Pancreas (tissue), 10 donors: ENCODE measurements at regions of chr11 and their contacts with region 1.

Region 1: GRCh38 chr11:62905927-62906531 is 15.1 kb downstream of the CHRM1 start:
- DNase-seq: peak; percentile 66 to 94 (median 87)
- ATAC-seq: peak in 3 of 4 donors; percentile 62 to 71 (median 64)
- H3K4me3 ChIP-seq: no peak overlapping the region
- H3K27ac ChIP-seq: no peak overlapping the region
- H3K4me1 ChIP-seq: peaks cover 17 to 18% (median 18%) of the 10 kb centered on the region in 3 donors
- H3K27me3 ChIP-seq: no peaks in the 10 kb centered on the region
- CTCF ChIP-seq: peak; percentile 95 to 98 (median 97)

Region 2: GRCh38 chr11:62601394-62602140 is 304.5 kb before region 1 on chr11 and contains the start of gene MTA2:
- intact Hi-C with region 1: no loop called
- DNase-seq: peak; percentile 97 to 100 (median 98)
- ATAC-seq: peak; percentile 90 to 94 (median 90)
- H3K4me3 ChIP-seq: peak within 1 kb of the TSS; percentile 84 to 96 (median 90)
- H3K27ac ChIP-seq: peak within 1 kb of the TSS; percentile 74 to 94 (median 88)
- H3K4me1 ChIP-seq: peaks cover 0 to 14% (median 11%) of the 10 kb centered on the region in 3 donors
- H3K27me3 ChIP-seq: no peaks in the 10 kb centered on the region
- CTCF ChIP-seq: no peak
- total RNA-seq, gene MTA2: 14.7 to 35.6 (median 23.0) TPM

Region 3: DNA sequence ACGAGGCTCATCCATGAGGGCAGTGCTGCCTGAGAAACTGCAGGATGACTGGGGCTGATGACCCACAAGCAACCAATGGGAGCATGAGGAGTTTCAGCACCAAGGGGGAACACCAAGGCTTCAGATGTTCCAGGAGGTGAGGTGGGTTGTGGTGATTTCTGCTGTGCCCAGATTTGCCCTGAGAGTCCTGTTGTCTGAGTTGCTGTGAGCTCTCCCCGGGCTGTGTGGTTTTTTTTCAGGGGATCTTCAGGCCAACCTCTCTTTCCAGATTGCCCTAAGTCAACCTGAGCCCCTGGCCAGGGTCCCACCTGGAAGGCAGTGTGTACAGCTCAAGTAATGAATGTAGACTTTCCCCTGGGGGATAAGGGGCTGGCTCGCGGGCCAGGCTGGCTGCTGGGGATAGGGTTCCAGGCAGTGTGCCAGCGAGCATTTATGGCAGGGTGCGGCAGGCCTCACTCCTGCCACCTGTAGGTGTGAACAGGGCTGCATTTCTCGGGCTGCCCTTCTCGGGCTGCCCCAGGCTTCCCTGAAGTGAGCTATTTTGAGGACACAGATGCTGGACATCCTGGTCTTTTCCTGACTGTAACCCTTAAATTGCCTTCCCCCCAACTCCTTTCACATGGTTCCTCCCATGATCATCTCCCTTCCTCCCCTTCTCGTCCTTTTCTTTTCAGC is 69.0 kb after region 1 on chr11:
- intact Hi-C with region 1: loop called in 1 of 3 experiments (anchors 10 kb)
- DNase-seq: peak; percentile 44 to 89 (median 79)
- ATAC-seq: peak; percentile 92 to 99 (median 96)
- H3K4me3 ChIP-seq: no peak overlapping the region
- H3K27ac ChIP-seq: no peak overlapping the region
- H3K4me1 ChIP-seq: peaks cover 0 to 3% (median 0%) of the 10 kb centered on the region in 3 donors
- H3K27me3 ChIP-seq: no peaks in the 10 kb centered on the region
- CTCF ChIP-seq: peak; percentile 49 to 66 (median 62)

Region 4: DNA sequence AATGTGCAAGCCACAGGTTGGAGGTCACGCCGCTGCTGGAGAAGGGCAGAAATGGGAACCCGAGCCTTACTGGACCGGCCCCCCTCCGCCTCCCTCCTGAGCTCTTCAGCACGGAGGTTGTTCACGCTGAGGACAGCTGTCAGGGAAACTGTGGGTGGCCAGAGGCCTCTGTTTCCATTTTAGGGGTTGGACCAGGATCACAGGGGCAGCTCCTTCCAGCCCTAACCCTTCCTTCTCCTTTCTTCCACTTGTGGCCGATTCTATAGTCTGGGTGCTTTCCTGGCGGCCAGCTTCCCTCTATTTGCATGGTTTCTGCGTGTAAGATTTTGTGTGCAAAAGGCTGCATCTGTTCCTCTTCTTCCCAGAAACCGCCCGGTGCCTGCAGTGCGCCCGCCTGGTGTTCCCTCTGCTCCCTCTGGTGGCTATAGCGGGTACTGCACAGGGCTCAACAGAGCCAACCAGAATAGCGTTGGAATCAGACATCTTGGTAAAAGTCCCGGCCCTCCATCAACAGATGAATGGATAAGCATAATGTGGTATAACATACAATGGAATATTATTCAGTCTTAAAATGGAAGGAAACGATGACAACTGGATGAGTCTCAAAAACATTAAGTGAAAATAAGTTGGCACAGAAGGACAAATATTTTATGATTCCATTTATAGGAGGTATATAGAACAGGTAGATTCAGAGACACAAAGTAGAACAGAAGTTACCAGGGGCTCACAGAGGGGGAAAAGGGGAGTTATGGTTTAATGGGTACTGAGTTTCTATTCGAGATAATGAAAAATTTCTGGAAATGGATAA is 118.0 kb after region 1 on chr11:
- intact Hi-C with region 1: loop called (anchors 2 to 5 kb)
- DNase-seq: peak; percentile 73 to 99 (median 90)
- ATAC-seq: peak; percentile 88 to 100 (median 98)
- H3K4me3 ChIP-seq: peak overlapping the region in 1 of 4 donors; percentile 13
- H3K27ac ChIP-seq: no peak overlapping the region
- H3K4me1 ChIP-seq: no peaks in the 10 kb centered on the region
- H3K27me3 ChIP-seq: no peaks in the 10 kb centered on the region
- CTCF ChIP-seq: peak; percentile 91 to 99 (median 98)